K562 (cell line): ENCODE measurements at regions of chr7 and their contacts with region 1.

Region 1: GRCh38 chr7:158891922-158892321 is 35.6 kb downstream of the DYNC2I1 start:
- DNase-seq: no peak
- ATAC-seq: no peak
- H3K4me3 ChIP-seq: no peak overlapping the region
- H3K27ac ChIP-seq: no peak overlapping the region
- H3K4me1 ChIP-seq: peaks cover 0 to 3% of the 10 kb centered on the region in 2 experiments; a peak in 1 of 5 replicates
- H3K27me3 ChIP-seq: no peaks in the 10 kb centered on the region
- CTCF ChIP-seq: no peak
- EP300 ChIP-seq: no peak
- POLR2A ChIP-seq: no peak
- RAD21 ChIP-seq: no peak

Region 2: DNA sequence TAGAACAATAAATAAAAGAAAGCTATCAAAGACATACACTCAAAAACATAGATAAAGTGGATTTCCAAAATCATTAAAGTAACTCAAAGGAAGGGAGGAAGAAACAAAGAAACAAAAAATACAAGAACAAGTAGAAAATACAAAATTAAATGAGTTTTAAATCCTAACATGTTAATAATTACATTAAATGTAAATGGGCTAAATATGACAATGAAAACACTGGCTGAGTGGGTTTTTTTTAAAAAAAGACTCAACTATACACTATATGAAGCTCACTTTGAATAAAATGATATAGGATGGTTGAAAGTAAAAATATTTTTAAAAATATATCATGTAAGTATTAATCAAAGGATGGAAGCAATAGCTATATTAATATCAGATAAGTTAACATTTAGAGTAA is 675.7 kb before region 1 on chr7:
- CTCF ChIA-PET with region 1: no interaction called
- POLR2A ChIA-PET with region 1: no interaction called
- in situ Hi-C with region 1: no loop called
- intact Hi-C with region 1: no loop called
- DNase-seq: no peak
- ATAC-seq: no peak
- H3K4me3 ChIP-seq: no peak overlapping the region
- H3K27ac ChIP-seq: no peak overlapping the region
- H3K4me1 ChIP-seq: no peaks in the 10 kb centered on the region
- H3K27me3 ChIP-seq: no peaks in the 10 kb centered on the region
- CTCF ChIP-seq: no peak
- EP300 ChIP-seq: no peak
- POLR2A ChIP-seq: no peak
- RAD21 ChIP-seq: no peak

Region 3: GRCh38 chr7:158282461-158283001 is 609.4 kb before region 1 on chr7:
- CTCF ChIA-PET with region 1: no interaction called
- POLR2A ChIA-PET with region 1: no interaction called
- in situ Hi-C with region 1: no loop called
- intact Hi-C with region 1: no loop called
- DNase-seq: no peak
- ATAC-seq: no peak
- H3K4me3 ChIP-seq: no peak overlapping the region
- H3K27ac ChIP-seq: no peak overlapping the region
- H3K4me1 ChIP-seq: no peaks in the 10 kb centered on the region
- H3K27me3 ChIP-seq: peaks cover 39 to 67% of the 10 kb centered on the region in 2 experiments
- CTCF ChIP-seq: no peak
- EP300 ChIP-seq: no peak
- POLR2A ChIP-seq: no peak
- RAD21 ChIP-seq: no peak

Region 4: DNA sequence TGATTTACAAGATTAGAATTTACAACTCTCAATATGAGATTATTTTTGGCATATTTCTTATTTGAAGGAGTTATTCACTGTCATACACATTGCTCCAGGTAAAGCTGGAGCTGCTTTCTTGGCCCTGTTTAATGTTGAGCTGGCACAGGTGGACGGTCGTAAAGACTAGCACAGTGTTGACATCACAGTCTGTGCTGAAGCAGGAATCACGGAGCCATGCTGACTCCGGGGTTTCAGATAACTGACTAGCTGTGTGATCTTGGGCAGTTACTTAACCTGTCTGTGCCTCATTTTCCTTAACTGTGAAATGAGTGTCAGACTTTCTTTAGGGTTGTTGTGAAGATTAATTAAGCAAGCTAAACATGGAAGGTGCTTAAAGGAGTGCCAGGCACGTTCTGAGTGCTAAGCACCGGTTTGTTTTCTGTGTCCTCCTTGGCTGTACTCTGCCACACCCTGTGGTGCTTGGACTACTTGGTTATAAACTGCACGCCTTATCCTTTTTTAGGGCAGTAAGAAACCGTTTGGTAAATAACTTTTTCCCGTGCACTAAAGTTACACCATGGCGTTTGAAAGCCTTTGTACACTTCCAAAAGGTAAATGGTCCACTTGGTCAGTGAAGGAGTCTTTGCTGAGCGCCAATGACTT is 12.1 kb after region 1 on chr7:
- CTCF ChIA-PET with region 1: no interaction called
- POLR2A ChIA-PET with region 1: interaction called, 11 read pairs
- in situ Hi-C with region 1: no loop called
- intact Hi-C with region 1: no loop called
- DNase-seq: no peak
- ATAC-seq: peak; percentile 31
- H3K4me3 ChIP-seq: no peak overlapping the region
- H3K27ac ChIP-seq: no peak overlapping the region
- H3K4me1 ChIP-seq: peaks cover 3 to 6% of the 10 kb centered on the region in 2 experiments; a peak in 3 of 5 replicates
- H3K27me3 ChIP-seq: no peaks in the 10 kb centered on the region
- CTCF ChIP-seq: no peak
- EP300 ChIP-seq: no peak
- POLR2A ChIP-seq: no peak
- RAD21 ChIP-seq: no peak